ENCODE measurements at regions of chr1 and their contacts with region 1.

Region 1: DNA sequence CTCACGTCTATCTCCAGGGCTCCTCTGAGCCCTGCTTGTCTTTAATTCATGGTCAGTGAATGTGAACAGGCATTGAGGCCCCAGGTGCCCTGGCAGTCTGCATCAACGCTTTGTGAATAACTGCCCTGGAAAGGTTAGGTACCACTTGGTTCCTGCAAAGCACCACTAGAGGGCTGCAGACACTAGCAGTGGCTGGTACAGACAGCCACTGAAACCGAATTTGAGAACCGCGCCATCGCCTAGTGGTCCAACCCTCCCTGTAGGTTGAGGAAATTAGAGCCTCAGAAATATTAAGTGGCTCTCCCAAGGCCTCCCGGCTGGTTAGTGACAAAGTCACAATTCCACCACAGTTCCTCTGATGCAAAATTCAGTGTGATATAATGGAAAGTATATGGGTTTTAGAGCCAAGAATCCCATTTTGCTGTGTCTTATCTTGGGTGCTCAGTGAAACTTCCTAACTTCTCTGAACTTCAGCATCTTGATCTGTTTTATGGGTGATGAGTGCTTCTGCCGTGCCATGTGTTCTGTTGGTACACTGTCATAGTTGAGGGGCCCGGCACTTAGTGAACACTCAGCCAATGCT is 46.2 kb upstream of the BCL9 start:
- DNase-seq: no peak
- H3K4me3 ChIP-seq: no peak overlapping the region
- H3K27ac ChIP-seq: no peak overlapping the region
- H3K4me1 ChIP-seq: peaks cover 0 to 5% (median 0%) of the 10 kb centered on the region in 3 donors
- H3K27me3 ChIP-seq: peaks cover 0 to 5% (median 0%) of the 10 kb centered on the region in 4 donors
- CTCF ChIP-seq: peak; percentile 65 to 87 (median 86)
- POLR2A ChIP-seq: no peak

Region 2: GRCh38 chr1:147236959-147237826 is 257.9 kb before region 1 on chr1:
- intact Hi-C with region 1: no loop called
- DNase-seq: no peak
- H3K4me3 ChIP-seq: no peak overlapping the region
- H3K27ac ChIP-seq: peak overlapping the region in 1 of 4 donors; percentile 33
- H3K4me1 ChIP-seq: peaks cover 11 to 28% (median 12%) of the 10 kb centered on the region in 3 donors
- H3K27me3 ChIP-seq: no peaks in the 10 kb centered on the region
- CTCF ChIP-seq: no peak
- POLR2A ChIP-seq: no peak

Region 3: DNA sequence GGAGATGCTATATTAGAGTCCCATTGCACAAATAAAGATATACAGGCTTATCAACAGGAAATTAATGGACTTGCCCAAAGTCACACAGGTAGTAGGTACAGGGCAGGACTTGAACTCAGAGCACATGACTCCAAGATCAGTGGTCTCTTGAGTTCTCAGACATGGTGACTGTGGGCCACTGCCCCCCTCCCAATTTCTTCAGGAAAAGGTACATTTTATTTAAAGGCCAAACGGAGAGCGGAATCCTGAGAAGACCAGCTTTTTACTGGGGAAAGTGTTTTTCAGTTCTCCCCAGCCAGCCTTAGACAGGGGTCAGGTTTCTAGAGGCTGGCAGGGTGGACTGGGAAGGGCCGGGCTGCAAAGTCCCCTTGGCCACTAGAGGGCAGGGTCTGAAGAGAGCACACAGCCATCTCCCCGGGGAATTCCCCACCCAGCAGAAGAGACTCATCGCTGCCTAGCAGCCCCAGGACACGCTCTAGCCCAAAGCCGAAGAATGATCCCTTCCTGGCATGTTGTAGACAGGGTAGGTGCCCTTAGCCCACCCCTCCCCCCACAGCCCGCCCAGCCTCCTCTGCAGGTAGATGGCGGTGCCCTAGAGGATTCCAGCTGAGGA is 145.6 kb after region 1 on chr1:
- intact Hi-C with region 1: loop called (anchors 5 kb)
- DNase-seq: no peak
- H3K4me3 ChIP-seq: no peak overlapping the region
- H3K27ac ChIP-seq: no peak overlapping the region
- H3K4me1 ChIP-seq: peaks cover 3 to 14% (median 5%) of the 10 kb centered on the region in 3 donors
- H3K27me3 ChIP-seq: no peaks in the 10 kb centered on the region
- CTCF ChIP-seq: peak; percentile 46 to 83 (median 76)
- POLR2A ChIP-seq: no peak

Region 4: DNA sequence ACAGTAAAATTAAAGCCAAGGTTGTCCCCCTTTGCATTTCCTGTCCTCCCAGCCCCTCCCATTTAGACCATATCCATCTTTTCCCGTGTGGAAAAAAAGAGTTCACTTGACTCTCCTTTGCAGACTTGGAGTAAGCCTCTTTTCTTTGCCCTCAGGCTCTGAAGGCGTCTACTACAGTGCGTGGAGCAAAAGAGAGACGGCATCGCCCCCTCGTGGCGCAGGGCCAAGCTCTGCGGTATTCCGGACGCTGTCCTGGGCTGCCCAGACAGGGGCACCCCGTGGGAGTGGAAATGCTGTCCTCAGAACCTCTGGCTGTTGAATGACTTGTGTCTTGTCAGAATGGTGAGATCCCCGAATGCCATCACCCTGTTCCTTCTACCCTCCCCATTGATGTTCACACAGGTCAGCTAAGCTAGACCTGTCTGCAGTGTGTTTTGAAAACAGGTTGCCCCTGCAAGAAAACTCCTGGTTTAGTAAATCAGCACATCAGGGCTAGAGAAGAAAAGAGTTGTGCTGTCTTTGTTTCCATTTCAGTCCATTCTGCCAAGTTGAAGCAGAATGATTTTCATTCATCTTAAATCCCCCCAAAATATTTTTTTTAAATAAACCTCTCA is 395.2 kb after region 1 on chr1:
- intact Hi-C with region 1: loop called (anchors 10 kb)
- DNase-seq: no peak
- H3K4me3 ChIP-seq: no peak overlapping the region
- H3K27ac ChIP-seq: no peak overlapping the region
- H3K4me1 ChIP-seq: peaks cover 0 to 10% (median 0%) of the 10 kb centered on the region in 3 donors
- H3K27me3 ChIP-seq: peaks cover 0 to 12% (median 0%) of the 10 kb centered on the region in 4 donors
- CTCF ChIP-seq: peak in 5 of 6 experiments; percentile 34 to 71 (median 53)
- POLR2A ChIP-seq: no peak

Measured in esophagus squamous epithelium (tissue), 5 donors.